PC-3 (cell line): ENCODE measurements at regions of chr12 and their contacts with region 1.

Region 1: DNA sequence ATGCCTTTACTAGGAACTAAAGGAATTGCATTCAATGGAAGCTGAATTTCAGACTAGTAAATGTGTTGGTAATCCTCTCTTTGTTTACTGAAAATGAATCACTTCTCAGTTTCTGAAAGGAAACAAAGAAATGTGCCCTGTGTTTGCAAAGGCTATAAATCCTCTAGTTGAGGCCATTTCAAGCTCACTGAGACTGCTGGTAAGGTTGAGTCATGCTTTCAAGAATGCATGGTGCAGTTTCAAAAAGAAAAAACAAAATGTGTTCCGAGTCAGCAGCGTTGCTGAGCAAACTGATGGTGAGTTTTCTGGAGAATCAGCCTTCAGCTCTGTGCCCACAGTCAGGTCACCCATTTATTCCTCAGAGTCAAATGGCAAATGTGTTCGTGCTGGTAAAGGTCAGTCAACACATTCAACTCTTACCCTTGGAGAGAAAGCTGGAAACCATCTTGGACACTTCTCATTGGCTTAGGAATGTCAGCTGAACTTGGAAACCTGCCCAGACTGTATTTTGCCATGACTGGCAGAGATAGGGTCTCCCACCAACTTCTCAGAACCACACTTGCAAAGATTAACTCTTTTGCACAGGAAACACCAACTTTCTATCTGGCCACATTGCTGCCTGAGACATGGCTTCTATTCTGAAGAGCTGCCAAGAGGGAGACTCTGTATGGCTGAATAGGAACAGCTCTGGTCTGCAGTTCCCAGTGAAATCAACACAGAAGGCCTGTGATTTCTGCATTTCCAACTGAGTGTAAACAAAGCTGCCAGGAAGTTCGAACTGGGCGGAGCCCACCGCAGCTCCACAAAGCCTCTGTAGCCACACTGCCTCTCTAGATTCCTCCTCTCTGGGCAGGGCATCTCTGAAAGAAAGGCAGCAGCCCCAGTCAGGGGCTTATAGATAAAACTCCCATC is 484.4 kb downstream of the ATP23 start:
- DNase-seq: peak; percentile 95
- ATAC-seq: peak; percentile 87
- H3K4me3 ChIP-seq: peak overlapping the region; percentile 51
- H3K27ac ChIP-seq: peak overlapping the region; percentile 99
- H3K4me1 ChIP-seq: peaks cover 42% of the 10 kb centered on the region
- H3K27me3 ChIP-seq: no peaks in the 10 kb centered on the region
- CTCF ChIP-seq: no peak

Region 2: DNA sequence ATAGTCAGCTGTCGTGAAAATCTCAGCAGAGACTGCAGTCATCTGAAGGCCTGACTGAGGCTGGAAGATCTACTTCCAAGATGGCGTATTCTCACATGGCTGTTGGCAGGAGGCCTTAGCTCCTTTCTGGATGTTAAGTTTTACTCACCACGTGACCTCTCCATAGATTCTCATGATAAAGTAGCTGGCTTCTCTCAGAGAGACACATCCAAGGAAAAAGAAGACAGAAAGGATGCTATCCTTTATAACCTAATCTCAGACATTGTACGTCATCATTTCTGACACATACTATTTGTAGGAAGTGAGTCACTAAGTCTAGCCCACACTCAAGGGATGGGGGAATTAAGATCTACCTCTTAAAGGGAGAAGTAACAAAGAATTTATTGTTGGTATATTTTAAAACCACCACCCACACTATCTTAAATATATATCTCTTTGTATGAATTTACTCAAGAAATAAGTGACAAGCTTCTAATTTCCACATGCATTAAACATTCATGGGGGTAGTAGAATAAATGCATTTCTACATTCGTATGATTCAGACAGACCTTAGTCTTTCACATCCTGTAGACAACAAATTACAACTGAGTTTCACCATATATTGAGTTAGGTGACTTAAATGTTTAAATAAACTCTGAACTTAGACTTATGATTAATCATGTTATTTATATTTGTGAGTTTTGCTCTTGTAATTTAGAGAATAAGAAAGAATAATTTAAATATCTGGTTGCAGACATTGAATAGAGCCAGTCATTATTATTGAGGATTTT is 83.6 kb after region 1 on chr12:
- CTCF ChIA-PET with region 1: no interaction called
- POLR2A ChIA-PET with region 1: no interaction called
- intact Hi-C with region 1: loop called (anchors 5 kb)
- DNase-seq: peak; percentile 91
- ATAC-seq: peak; percentile 85
- H3K4me3 ChIP-seq: no peak overlapping the region
- H3K27ac ChIP-seq: peak overlapping the region; percentile 99
- H3K4me1 ChIP-seq: peaks cover 23% of the 10 kb centered on the region
- H3K27me3 ChIP-seq: no peaks in the 10 kb centered on the region
- CTCF ChIP-seq: no peak